MCF 10A (cell line): ENCODE measurements at regions of chr11 and their contacts with region 1.

Region 1: GRCh38 chr11:45102810-45103621 is 43.4 kb upstream of the PRDM11 start:
- DNase-seq: peak; percentile 75
- H3K4me3 Mint-ChIP-seq: no peak overlapping the region
- H3K27ac Mint-ChIP-seq: no peak overlapping the region
- H3K4me1 Mint-ChIP-seq: peaks cover 19% of the 10 kb centered on the region
- H3K27me3 Mint-ChIP-seq: no peaks in the 10 kb centered on the region
- CTCF ChIP-seq: peak; percentile 96

Region 2: DNA sequence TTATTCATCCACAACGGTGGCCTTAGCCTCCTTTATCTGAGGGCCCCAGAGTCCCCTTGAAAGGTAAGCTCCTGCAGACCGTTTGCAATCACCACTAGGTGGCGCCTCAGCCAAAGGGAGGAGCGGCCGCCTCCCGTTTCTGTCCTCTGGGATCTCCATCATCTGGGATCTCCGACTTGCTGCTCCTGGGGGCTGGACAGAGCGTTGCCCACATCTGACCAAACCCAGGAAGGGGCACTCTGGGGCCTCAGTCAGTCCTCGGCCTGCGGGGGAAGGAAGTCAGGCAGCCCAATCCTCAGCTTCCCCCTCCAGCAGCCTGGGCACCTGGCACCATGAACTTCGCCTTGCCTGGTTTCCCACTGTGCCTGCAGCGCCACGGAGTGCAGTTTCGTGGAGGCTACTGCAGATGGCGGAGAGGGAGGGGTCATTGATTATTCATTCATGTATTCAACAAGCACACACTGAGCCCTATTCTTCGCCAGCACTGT is 175.8 kb before region 1 on chr11:
- CTCF ChIA-PET with region 1: interaction called, 1,181 read pairs
- POLR2A ChIA-PET with region 1: interaction called, 36 read pairs
- intact Hi-C with region 1: loop called (anchors 1 kb)
- DNase-seq: peak; percentile 79
- H3K4me3 Mint-ChIP-seq: no peak overlapping the region
- H3K27ac Mint-ChIP-seq: no peak overlapping the region
- H3K4me1 Mint-ChIP-seq: peaks cover 5% of the 10 kb centered on the region
- H3K27me3 Mint-ChIP-seq: peaks cover 34% of the 10 kb centered on the region
- CTCF ChIP-seq: peak; percentile 84

Region 3: GRCh38 chr11:44936525-44936924 is 166.5 kb before region 1 on chr11:
- CTCF ChIA-PET with region 1: interaction called, 1,181 read pairs
- POLR2A ChIA-PET with region 1: interaction called, 29 read pairs
- intact Hi-C with region 1: loop called (anchors 1 kb)
- DNase-seq: peak; percentile 77
- H3K4me3 Mint-ChIP-seq: no peak overlapping the region
- H3K27ac Mint-ChIP-seq: no peak overlapping the region
- H3K4me1 Mint-ChIP-seq: no peaks in the 10 kb centered on the region
- H3K27me3 Mint-ChIP-seq: no peaks in the 10 kb centered on the region
- CTCF ChIP-seq: peak; percentile 89

Region 4: GRCh38 chr11:44950625-44951476 is 152.2 kb before region 1 on chr11 and contains the start of gene TP53I11:
- CTCF ChIA-PET with region 1: interaction called, 80 read pairs
- POLR2A ChIA-PET with region 1: interaction called, 4 read pairs
- intact Hi-C with region 1: no loop called
- DNase-seq: peak; percentile 51
- H3K4me3 Mint-ChIP-seq: peak within 1 kb of the TSS; percentile 68
- H3K27ac Mint-ChIP-seq: no peak within 1 kb of the TSS
- H3K4me1 Mint-ChIP-seq: peaks cover 9% of the 10 kb centered on the region
- H3K27me3 Mint-ChIP-seq: no peaks in the 10 kb centered on the region
- CTCF ChIP-seq: peak; percentile 83
- total RNA-seq, gene TP53I11: 14.8 and 17.7 TPM in 2 replicates

Region 5: DNA sequence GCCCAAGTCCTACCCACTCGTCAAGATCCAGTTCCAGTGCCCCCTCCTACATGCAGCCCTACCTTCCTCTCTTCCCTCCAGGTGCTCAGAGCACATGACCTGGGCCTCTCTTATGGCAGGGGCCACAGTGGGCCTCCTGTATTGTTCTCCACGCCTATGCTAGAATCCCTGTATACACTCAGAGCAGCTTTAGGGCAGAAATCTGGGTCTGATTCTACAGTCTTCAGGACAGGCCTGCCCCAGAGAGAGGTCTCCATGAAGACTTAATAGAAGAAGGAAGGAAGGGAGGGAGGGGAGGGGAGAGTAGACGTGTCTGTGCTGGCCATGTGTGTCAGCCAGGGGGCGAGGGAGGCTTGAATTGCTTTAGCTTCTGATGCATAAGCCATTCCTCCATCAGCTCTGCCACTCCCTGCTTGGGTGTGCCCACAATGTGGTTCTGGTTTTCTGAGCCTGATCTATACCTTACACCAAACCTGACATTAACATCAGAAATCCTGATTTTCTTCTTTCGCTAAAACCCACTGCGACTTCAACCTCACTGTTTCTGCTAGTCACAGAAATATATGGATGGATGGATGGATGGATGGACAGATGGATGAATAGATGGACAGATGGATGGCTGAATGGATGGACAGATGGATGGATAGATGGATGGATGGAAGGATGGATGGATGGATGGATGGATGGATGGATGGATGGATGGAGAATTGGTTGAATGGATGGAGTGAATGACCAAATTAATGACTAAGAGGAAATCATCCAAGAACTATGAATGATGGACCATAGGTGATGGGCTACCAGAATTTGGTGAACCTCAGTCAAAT is 13.1 kb before region 1 on chr11:
- CTCF ChIA-PET with region 1: interaction called, 30 read pairs
- POLR2A ChIA-PET with region 1: interaction called, 15 read pairs
- intact Hi-C with region 1: no loop called
- DNase-seq: peak; percentile 46
- H3K4me3 Mint-ChIP-seq: peak overlapping the region; percentile 35
- H3K27ac Mint-ChIP-seq: peak overlapping the region; percentile 89
- H3K4me1 Mint-ChIP-seq: peaks cover 41% of the 10 kb centered on the region
- H3K27me3 Mint-ChIP-seq: no peaks in the 10 kb centered on the region
- CTCF ChIP-seq: no peak

Region 6: GRCh38 chr11:45285930-45286632 is 183.1 kb after region 1 on chr11 and contains the start of gene SYT13:
- CTCF ChIA-PET with region 1: interaction called, 56 read pairs
- POLR2A ChIA-PET with region 1: interaction called, 3 read pairs
- intact Hi-C with region 1: no loop called
- DNase-seq: no peak
- H3K4me3 Mint-ChIP-seq: no peak within 1 kb of the TSS
- H3K27ac Mint-ChIP-seq: no peak within 1 kb of the TSS
- H3K4me1 Mint-ChIP-seq: peaks cover 6% of the 10 kb centered on the region
- H3K27me3 Mint-ChIP-seq: peaks cover 50% of the 10 kb centered on the region
- CTCF ChIP-seq: no peak
- total RNA-seq, gene SYT13: not detected in 2 replicates

Region 7: GRCh38 chr11:45332276-45332934 is 229.4 kb after region 1 on chr11:
- CTCF ChIA-PET with region 1: interaction called, 121 read pairs
- POLR2A ChIA-PET with region 1: interaction called, 3 read pairs
- intact Hi-C with region 1: no loop called
- DNase-seq: peak; percentile 52
- H3K4me3 Mint-ChIP-seq: no peak overlapping the region
- H3K27ac Mint-ChIP-seq: no peak overlapping the region
- H3K4me1 Mint-ChIP-seq: peaks cover 6% of the 10 kb centered on the region
- H3K27me3 Mint-ChIP-seq: peaks cover 20% of the 10 kb centered on the region
- CTCF ChIP-seq: peak; percentile 84